ENCODE measurements at regions of chr12 and their contacts with region 1.

Region 1: GRCh38 chr12:119988782-119989668 is at the start of gene BICDL1:
- DNase-seq: peak; percentile 95 to 97 (median 96)
- ATAC-seq: peak; percentile 95
- H3K4me3 ChIP-seq: peak within 1 kb of the TSS; percentile 55
- H3K27ac ChIP-seq: no peak within 1 kb of the TSS
- H3K4me1 ChIP-seq: peaks cover 0 to 20% of the 10 kb centered on the region in 2 experiments; a peak in 2 of 5 replicates
- H3K27me3 ChIP-seq: peaks cover 12 to 17% of the 10 kb centered on the region in 2 experiments
- CTCF ChIP-seq: peak in 2 of 3 experiments; percentile 7 to 33; a peak in 2 of 6 replicates
- EP300 ChIP-seq: no peak
- POLR2A ChIP-seq: no peak
- RAD21 ChIP-seq: no peak
- polyA plus RNA-seq, gene BICDL1: 0.06 to 0.07 TPM

Region 2: DNA sequence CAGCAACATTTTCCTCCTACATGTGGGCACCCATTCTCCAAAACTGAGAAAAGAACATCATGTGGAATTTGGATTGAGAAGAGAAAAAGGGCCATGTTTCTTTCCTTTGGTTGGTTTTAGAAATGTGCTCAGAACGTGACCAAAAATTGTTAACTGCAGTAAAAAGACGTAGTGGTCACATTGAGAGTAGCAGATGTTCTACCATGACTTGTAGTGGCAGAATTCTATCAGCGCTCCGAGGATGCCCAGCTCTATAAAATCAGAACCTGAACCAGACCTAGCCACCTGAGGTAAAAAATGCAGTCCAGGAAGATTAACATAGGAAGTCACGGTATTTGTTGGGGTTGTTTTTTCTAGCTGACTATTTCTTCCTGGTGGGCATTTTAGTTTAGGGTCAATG is 497.2 kb before region 1 on chr12:
- CTCF ChIA-PET with region 1: no interaction called
- POLR2A ChIA-PET with region 1: no interaction called
- in situ Hi-C with region 1: no loop called
- intact Hi-C with region 1: no loop called
- DNase-seq: no peak
- ATAC-seq: no peak
- H3K4me3 ChIP-seq: no peak overlapping the region
- H3K27ac ChIP-seq: no peak overlapping the region
- H3K4me1 ChIP-seq: no peaks in the 10 kb centered on the region
- H3K27me3 ChIP-seq: peaks cover 3 to 8% of the 10 kb centered on the region in 2 experiments; a peak in 4 of 5 replicates
- CTCF ChIP-seq: no peak
- EP300 ChIP-seq: no peak
- POLR2A ChIP-seq: no peak
- RAD21 ChIP-seq: no peak

Region 3: GRCh38 chr12:119925269-119925668 is 63.8 kb before region 1 on chr12:
- CTCF ChIA-PET with region 1: no interaction called
- POLR2A ChIA-PET with region 1: no interaction called
- in situ Hi-C with region 1: no loop called
- intact Hi-C with region 1: no loop called
- DNase-seq: no peak
- ATAC-seq: no peak
- H3K4me3 ChIP-seq: no peak overlapping the region
- H3K27ac ChIP-seq: no peak overlapping the region
- H3K4me1 ChIP-seq: no peaks in the 10 kb centered on the region
- H3K27me3 ChIP-seq: peaks cover 17% of the 10 kb centered on the region in 2 experiments; a peak in 4 of 5 replicates
- CTCF ChIP-seq: no peak
- EP300 ChIP-seq: no peak
- POLR2A ChIP-seq: no peak
- RAD21 ChIP-seq: no peak

Region 4: GRCh38 chr12:120041386-120042231 is 52.6 kb after region 1 on chr12:
- CTCF ChIA-PET with region 1: no interaction called
- POLR2A ChIA-PET with region 1: no interaction called
- in situ Hi-C with region 1: no loop called
- intact Hi-C with region 1: no loop called
- DNase-seq: no peak
- ATAC-seq: no peak
- H3K4me3 ChIP-seq: no peak overlapping the region
- H3K27ac ChIP-seq: no peak overlapping the region
- H3K4me1 ChIP-seq: no peaks in the 10 kb centered on the region
- H3K27me3 ChIP-seq: peaks cover 12 to 17% of the 10 kb centered on the region in 2 experiments
- CTCF ChIP-seq: no peak
- EP300 ChIP-seq: no peak
- POLR2A ChIP-seq: no peak
- RAD21 ChIP-seq: no peak

Region 5: GRCh38 chr12:120086801-120087621 is 98.0 kb after region 1 on chr12:
- CTCF ChIA-PET with region 1: interaction called, 3 read pairs
- POLR2A ChIA-PET with region 1: interaction called, 4 read pairs
- in situ Hi-C with region 1: no loop called
- intact Hi-C with region 1: loop called (anchors 5 kb)
- DNase-seq: peak; percentile 96 to 97 (median 96)
- ATAC-seq: peak; percentile 97
- H3K4me3 ChIP-seq: peak overlapping the region; percentile 39
- H3K27ac ChIP-seq: peak overlapping the region; percentile 26; the same call in 1 of the 3 replicates
- H3K4me1 ChIP-seq: peaks cover 15% of the 10 kb centered on the region in 2 experiments; a peak in 3 of 5 replicates
- H3K27me3 ChIP-seq: peaks cover 0 to 3% of the 10 kb centered on the region in 2 experiments; a peak in 1 of 5 replicates
- CTCF ChIP-seq: peak; percentile 93 to 98 (median 93)
- EP300 ChIP-seq: 0 out of 2 replicates have a peak, but pooled peaks have one; percentile 44
- POLR2A ChIP-seq: peak; percentile 50; the same call in 1 of the 2 replicates
- RAD21 ChIP-seq: peak; percentile 65 to 85

Measured in K562 (cell line).